ENCODE measurements at regions of chr10 and their contacts with region 1.

Region 1: DNA sequence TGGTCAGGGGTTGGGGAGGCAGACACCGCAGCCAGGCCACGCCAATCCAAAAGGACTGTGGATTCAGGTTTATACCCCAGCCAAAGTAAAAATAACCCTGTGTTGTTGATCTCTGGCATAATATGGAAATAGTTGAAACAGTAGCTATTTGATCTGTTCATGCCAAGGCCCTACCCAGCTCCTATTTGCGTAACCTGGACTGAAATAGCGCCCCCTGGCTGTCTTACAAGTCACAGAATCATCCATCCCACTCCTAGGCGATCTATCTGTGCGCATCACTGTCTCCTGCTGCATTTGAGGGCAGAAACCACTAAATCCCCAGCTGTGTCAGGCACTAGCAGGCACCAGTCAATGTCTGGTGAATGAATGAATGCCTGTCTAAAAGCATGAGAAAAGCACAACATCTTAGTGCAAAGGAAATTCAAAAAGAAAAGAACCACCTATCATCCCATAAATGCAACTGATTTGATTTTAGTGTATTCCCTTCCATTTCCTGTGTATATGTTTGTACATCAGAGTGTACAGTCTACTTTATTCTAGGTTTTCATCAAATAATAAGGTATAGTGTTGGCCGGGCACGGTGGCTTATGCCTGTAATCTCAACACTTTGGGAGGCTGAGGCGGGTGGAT is 160.0 kb downstream of the SLIT1 start:
- DNase-seq: no peak
- ATAC-seq: peak; percentile 41

Region 2: GRCh38 chr10:96642973-96643372 is 382.8 kb before region 1 on chr10:
- intact Hi-C with region 1: loop called (anchors 10 kb)
- DNase-seq: peak; percentile 88
- ATAC-seq: peak; percentile 53

Region 3: GRCh38 chr10:96765406-96766240 is 260.1 kb before region 1 on chr10:
- intact Hi-C with region 1: loop called (anchors 2 kb)
- DNase-seq: peak; percentile 83
- ATAC-seq: peak; percentile 62

Region 4: DNA sequence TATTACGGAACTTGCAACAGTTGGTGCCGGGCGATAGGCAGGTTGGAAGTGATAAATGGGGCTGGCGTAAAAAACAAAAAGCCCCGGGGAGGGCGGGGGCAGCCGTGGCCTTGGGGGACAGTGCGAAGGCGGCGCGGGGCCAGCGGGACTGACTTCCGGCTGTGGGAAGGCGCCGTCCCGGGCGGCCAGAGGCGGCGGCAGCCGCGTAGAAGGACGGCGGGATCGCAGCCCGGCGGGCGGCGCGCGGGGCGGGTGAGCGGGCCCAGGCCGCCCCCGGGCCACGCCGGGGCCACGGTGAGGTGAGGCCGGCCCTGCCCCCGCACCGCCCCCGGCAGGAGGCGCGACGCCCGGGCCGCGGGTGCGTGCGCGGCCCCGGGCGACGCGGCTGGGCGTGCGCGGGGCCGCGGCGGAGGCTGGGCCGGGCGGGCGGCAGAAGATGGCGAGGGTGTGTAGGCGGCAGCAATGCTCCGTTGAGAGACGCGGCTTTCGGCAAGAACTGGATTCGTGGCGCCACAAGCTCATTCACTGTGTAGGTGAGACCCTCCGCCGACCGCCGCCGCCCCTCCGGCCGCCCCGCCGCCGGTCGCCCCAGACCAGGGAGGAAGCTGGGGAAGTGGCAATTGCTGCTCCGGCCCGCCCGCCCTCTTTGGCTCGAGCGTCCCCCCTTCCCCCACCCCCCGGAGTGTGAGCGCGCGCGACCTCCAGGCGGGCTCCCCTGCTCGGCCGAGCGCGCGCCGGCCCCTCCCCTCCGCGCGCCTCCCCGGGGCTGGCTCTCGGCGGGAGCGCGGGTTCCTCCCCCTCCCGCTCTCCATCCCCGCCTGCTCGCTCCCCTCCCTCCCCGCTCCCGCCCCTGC is 193.6 kb before region 1 on chr10 and contains the start of gene LCOR:
- intact Hi-C with region 1: loop called (anchors 2 kb)
- DNase-seq: peak; percentile 93
- ATAC-seq: peak; percentile 91
- total RNA-seq, gene LCOR: 21.7 TPM

Region 5: DNA sequence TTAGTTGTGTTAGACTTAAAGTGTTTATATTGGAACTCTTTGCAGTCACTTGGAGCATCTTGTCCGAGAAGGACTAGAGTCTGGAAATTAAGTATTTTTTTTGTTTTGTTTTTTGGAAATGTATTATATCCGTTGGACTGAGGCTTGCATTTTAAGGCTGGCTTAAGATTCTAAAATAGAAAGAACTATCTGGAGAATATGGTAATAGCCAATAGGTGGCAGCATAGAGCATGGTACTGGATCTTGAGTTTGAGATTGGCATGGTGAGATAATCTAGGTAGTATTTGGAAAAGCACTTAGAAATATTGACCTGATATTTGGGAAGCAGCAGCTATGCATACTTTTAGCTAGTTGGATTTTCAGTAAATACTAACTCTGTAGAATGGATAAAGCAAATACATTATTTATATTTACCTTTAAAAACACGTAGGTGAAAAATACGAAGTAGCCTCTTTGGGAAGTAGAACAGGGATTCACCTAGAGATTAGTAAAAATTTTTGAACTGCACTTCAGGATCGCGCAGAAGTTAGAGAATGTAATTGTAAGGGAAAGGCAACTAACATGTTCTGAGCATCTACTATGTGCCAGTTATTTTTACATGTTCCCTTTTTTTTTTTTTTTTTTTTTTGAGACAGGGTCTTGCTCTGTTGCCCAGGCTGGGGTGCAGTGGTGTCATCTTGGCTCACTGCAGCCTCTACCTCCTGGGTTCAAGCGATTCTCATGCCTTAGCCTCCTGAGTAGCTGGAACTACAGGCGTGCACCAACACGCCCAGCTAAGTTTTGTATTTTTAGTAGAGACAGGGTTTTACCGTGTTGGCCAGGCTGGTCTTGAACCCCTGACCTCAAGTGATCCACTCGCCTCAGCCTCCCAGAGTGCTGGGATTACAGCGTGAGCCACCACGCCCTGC is 115.0 kb before region 1 on chr10:
- intact Hi-C with region 1: loop called (anchors 5 kb)
- DNase-seq: no peak
- ATAC-seq: no peak

Region 6: GRCh38 chr10:96978621-96979154 is 47.0 kb before region 1 on chr10:
- intact Hi-C with region 1: no loop called
- DNase-seq: no peak
- ATAC-seq: no peak